ENCODE measurements at regions of chr18 and their contacts with region 1.

Region 1: GRCh38 chr18:63523660-63524059 is 18.5 kb upstream of the SERPINB12 start:
- DNase-seq: no peak
- H3K4me3 ChIP-seq: no peak overlapping the region
- H3K27ac ChIP-seq: no peak overlapping the region
- H3K4me1 ChIP-seq: no peaks in the 10 kb centered on the region
- H3K27me3 ChIP-seq: no peaks in the 10 kb centered on the region
- CTCF ChIP-seq: no peak
- EP300 ChIP-seq: no peak
- POLR2A ChIP-seq: no peak

Region 2: DNA sequence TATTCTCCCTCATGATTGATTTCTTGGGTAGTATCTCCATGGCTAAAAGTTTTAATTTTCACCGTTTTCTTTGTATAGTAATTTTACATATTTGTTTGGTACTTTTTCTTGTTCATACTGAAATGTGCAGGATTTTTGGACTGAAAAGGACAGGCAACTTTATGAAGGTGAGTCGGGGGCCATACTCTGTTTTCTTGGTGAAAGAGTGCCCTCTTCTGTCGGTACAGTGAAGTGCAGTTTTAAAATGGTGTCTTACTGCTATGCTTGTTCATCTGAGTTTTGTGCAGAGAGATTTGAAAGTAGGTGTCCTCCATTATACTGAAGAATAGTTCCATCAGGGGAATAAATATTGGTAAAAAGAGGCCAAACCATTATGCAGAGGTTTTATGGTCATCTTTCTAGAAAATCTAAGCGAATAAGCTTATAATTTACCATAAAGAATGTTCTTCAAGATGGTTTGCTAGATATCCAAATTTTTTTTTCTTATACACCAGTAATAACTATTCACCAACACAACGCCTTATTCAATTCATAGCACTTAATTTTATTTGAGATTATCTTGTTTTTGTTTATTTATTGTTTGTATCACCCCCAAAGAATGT is 54.8 kb after region 1 on chr18:
- in situ Hi-C with region 1: loop called in 1 of 4 experiments (anchors 10 kb)
- intact Hi-C with region 1: no loop called
- DNase-seq: no peak
- H3K4me3 ChIP-seq: no peak overlapping the region
- H3K27ac ChIP-seq: no peak overlapping the region
- H3K4me1 ChIP-seq: no peaks in the 10 kb centered on the region
- H3K27me3 ChIP-seq: no peaks in the 10 kb centered on the region
- CTCF ChIP-seq: peak; percentile 53 to 64 (median 58)
- EP300 ChIP-seq: no peak
- POLR2A ChIP-seq: no peak

Region 3: DNA sequence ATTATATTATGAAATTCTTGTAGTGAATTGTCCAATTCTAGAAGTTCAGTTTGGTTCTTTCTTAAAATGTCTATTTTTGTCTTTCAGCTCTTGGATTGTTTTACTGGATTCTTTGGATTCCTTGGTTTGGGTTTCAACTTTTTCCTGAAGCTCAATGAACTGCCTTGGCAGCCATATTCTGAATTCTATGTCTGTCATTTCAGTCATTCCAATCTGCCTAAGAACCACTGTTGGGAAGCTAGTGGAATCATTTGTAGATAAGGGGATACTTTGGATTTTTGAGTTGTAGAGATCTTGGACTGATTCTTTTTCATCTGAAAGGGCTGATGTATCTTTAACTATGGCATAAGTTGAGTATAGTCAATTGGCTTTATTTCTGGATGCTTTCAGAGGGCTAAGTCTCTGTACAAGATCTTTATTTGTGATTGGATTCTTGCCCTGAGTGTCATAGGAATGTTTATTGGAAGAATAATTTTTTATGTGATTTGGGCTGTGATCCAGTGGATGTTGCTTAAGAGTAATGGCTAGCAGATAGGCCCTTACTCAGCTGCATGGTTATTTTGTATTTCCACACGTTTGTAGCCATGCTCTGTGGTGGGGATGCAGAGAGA is 293.9 kb after region 1 on chr18:
- in situ Hi-C with region 1: no loop called
- intact Hi-C with region 1: no loop called
- DNase-seq: no peak
- H3K4me3 ChIP-seq: no peak overlapping the region
- H3K27ac ChIP-seq: peak overlapping the region in 2 of 4 donors; percentile 35 to 50
- H3K4me1 ChIP-seq: peaks cover 0 to 23% (median 9%) of the 10 kb centered on the region in 4 donors
- H3K27me3 ChIP-seq: no peaks in the 10 kb centered on the region
- CTCF ChIP-seq: no peak
- EP300 ChIP-seq: no peak
- POLR2A ChIP-seq: no peak

Region 4: DNA sequence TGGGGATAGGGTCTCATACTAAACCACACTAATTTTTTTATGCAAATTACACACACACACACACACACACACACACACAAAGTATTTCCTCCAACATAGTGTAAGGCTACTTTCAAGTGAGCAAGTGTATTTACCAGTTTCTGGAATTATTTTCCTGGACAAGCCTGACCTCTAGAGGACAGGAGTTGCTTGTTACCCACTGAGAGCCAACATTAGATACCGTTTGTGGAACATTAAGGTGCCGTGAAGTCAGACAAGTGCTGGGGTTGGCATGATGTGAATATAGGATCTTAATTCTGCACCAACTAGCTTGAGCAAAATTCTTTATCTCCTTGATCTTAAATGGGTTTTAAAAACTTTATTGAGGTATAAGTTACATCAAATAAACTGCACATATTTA is 324.5 kb after region 1 on chr18:
- in situ Hi-C with region 1: loop called (anchors 10 to 25 kb)
- intact Hi-C with region 1: loop called (anchors 5 kb)
- DNase-seq: no peak
- H3K4me3 ChIP-seq: no peak overlapping the region
- H3K27ac ChIP-seq: no peak overlapping the region
- H3K4me1 ChIP-seq: no peaks in the 10 kb centered on the region
- H3K27me3 ChIP-seq: no peaks in the 10 kb centered on the region
- CTCF ChIP-seq: peak in 4 of 5 experiments; percentile 32 to 41 (median 40)
- EP300 ChIP-seq: no peak
- POLR2A ChIP-seq: no peak